Mammary epithelial cell (primary cell): ENCODE measurements at regions of chr3 and their contacts with region 1.

Region 1: GRCh38 chr3:36494461-36495109 is 114.3 kb downstream of the STAC start:
- DNase-seq: peak; percentile 46
- H3K4me3 ChIP-seq: no peak overlapping the region
- H3K27ac ChIP-seq: no peak overlapping the region
- H3K4me1 ChIP-seq: peaks cover 16% of the 10 kb centered on the region
- H3K27me3 ChIP-seq: no peaks in the 10 kb centered on the region
- CTCF ChIP-seq: no peak

Region 2: GRCh38 chr3:36175916-36176461 is 318.6 kb before region 1 on chr3:
- CTCF ChIA-PET with region 1: no interaction called
- dilution Hi-C with region 1: no loop called
- in situ Hi-C with region 1: no loop called
- intact Hi-C with region 1: no loop called
- DNase-seq: no peak
- H3K4me3 ChIP-seq: no peak overlapping the region
- H3K27ac ChIP-seq: no peak overlapping the region
- H3K4me1 ChIP-seq: peaks cover 17% of the 10 kb centered on the region
- H3K27me3 ChIP-seq: no peaks in the 10 kb centered on the region
- CTCF ChIP-seq: no peak

Region 3: GRCh38 chr3:36380221-36381031 is 114.2 kb before region 1 on chr3 and contains the start of gene STAC:
- CTCF ChIA-PET with region 1: no interaction called
- dilution Hi-C with region 1: no loop called
- in situ Hi-C with region 1: no loop called
- intact Hi-C with region 1: loop called (anchors 10 kb)
- DNase-seq: peak; percentile 60
- H3K4me3 ChIP-seq: peak within 1 kb of the TSS; percentile 75 to 97 (median 81)
- H3K27ac ChIP-seq: peak within 1 kb of the TSS; percentile 5
- H3K4me1 ChIP-seq: peaks cover 12% of the 10 kb centered on the region
- H3K27me3 ChIP-seq: no peaks in the 10 kb centered on the region
- CTCF ChIP-seq: no peak
- total RNA-seq, gene STAC: 19.3 to 25.3 TPM

Region 4: GRCh38 chr3:36451816-36452215 is 42.8 kb before region 1 on chr3:
- CTCF ChIA-PET with region 1: no interaction called
- dilution Hi-C with region 1: no loop called
- in situ Hi-C with region 1: no loop called
- intact Hi-C with region 1: loop called (anchors 1 kb)
- DNase-seq: no peak
- H3K4me3 ChIP-seq: no peak overlapping the region
- H3K27ac ChIP-seq: no peak overlapping the region
- H3K4me1 ChIP-seq: no peaks in the 10 kb centered on the region
- H3K27me3 ChIP-seq: no peaks in the 10 kb centered on the region
- CTCF ChIP-seq: no peak